ENCODE measurements at regions of chr13 and their contacts with region 1.

Region 1: GRCh38 chr13:26698392-26699196 is 62.0 kb downstream of the GPR12 start:
- DNase-seq: peak; percentile 84
- CTCF ChIP-seq: peak; percentile 82

Region 2: GRCh38 chr13:26502826-26503225 is 195.8 kb before region 1 on chr13:
- CTCF ChIA-PET with region 1: interaction called, 25 read pairs
- POLR2A ChIA-PET with region 1: no interaction called
- DNase-seq: no peak
- CTCF ChIP-seq: no peak

Region 3: GRCh38 chr13:26681036-26681435 is 17.6 kb before region 1 on chr13:
- CTCF ChIA-PET with region 1: interaction called, 11 read pairs
- POLR2A ChIA-PET with region 1: no interaction called
- DNase-seq: no peak
- CTCF ChIP-seq: no peak

Region 4: DNA sequence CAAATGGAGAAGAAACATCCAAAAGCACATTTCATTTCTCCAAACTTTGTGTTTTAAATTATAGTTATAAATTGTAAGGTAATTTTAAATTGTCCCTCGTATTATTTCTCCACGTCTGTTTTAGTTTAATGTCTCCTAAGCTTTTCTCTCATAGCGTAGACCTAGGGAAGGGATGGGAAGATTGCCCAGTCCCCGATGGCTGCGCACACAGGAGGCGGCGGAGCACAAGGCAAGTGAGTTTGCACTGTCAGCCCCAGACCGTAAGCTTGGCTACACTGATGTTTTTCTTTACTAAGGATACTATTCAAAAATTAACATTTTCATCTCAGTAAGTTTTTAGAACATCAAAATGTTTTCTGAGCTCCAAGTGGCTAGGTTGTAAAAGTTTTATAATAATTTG is 10.3 kb before region 1 on chr13:
- CTCF ChIA-PET with region 1: interaction called, 42 read pairs
- POLR2A ChIA-PET with region 1: no interaction called
- DNase-seq: no peak
- CTCF ChIP-seq: no peak

Region 5: GRCh38 chr13:27126859-27127258 is 428.3 kb after region 1 on chr13:
- CTCF ChIA-PET with region 1: no interaction called
- POLR2A ChIA-PET with region 1: no interaction called
- DNase-seq: no peak
- CTCF ChIP-seq: no peak

Region 6: DNA sequence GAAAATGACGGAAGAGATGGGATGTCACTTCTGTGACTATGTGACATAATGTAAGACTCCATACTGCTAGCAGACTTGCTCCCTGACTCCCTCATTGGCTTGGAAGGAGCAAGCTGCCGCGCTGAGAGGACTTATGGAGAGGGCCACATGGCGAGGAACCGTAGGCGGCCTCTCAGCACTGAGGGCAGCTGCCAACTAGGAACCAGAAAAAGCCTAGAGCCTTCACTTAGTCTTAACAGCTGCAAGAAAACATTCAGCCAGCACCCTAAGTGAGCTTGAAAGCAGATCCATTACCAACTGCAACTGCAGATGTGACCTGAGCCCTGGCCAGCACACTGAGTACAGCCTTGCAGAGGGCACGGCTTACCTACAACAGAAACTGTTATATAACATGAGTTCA is 439.2 kb after region 1 on chr13:
- CTCF ChIA-PET with region 1: no interaction called
- POLR2A ChIA-PET with region 1: no interaction called
- DNase-seq: no peak
- CTCF ChIP-seq: no peak